HepG2 (cell line): ENCODE measurements at regions of chr6 and their contacts with region 1.

Region 1: GRCh38 chr6:33391278-33391921 is at the start of gene KIFC1:
- DNase-seq: peak; percentile 100
- ATAC-seq: peak; percentile 97
- H3K4me3 ChIP-seq: peak within 1 kb of the TSS; percentile 83 to 95 (median 90)
- H3K27ac ChIP-seq: peak within 1 kb of the TSS; percentile 82
- H3K4me1 ChIP-seq: peaks cover 49% of the 10 kb centered on the region
- H3K27me3 ChIP-seq: no peaks in the 10 kb centered on the region; a peak in 1 of 5 replicates
- CTCF ChIP-seq: peak; percentile 100
- EP300 ChIP-seq: no peak; a peak in 1 of 4 replicates
- POLR2A ChIP-seq: peak; percentile 68 to 81
- RAD21 ChIP-seq: peak; percentile 90
- total RNA-seq, gene KIFC1: 45.5 and 47.6 TPM in 2 replicates

Region 2: DNA sequence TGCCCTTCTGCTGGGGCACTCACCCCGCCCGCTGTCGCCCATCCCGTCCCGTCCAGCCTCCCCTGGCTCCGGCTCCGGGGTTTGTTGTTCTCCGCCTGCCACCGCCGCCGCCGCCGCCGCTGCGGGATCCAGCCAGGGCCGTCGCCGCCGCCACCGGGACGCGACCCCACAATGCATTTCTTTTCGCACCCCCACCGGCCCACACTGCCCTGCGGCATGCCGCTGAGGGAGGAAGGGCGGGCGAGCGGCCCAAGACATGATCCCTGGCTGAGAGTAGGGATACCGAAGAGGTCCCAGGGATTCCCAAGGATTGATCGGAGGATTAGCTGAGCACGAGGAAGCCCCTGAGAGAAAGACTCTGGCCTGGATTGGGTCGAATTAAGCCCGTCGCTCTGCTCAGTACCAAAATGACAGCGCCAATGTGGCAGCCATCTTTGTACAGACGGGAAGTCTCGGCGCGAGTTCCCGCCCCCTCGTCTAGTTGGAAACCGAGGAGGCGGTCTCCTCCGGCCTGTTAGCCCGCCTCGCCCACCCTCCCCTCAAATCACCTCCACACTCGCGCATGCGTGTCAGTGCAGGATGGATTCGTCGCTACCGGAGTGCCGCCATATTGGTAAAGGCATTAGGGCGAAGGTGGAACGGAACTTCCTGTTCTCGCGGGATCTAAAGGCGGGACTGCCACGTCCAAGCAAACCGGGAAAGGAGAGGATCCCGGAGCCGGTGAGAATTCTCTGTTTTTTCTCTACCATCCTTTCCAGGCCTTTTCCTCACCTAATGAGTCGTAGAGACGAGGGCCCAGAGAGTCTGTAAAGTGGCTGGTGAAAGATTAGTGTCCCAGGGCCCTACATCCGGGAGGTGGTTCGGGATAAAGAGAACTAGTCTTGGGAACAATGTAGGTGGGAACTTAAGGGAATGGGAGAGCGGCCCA is 190.9 kb before region 1 on chr6 and contains the starts of genes RXRB and SLC39A7:
- CTCF ChIA-PET with region 1: no interaction called
- POLR2A ChIA-PET with region 1: no interaction called
- in situ Hi-C with region 1: no loop called
- intact Hi-C with region 1: loop called (anchors 5 kb)
- DNase-seq: peak; percentile 100
- ATAC-seq: peak; percentile 48
- H3K4me3 ChIP-seq: peak within 1 kb of the TSS; percentile 87 to 93 (median 93)
- H3K27ac ChIP-seq: peak within 1 kb of the TSS; percentile 99
- H3K4me1 ChIP-seq: peaks cover 66% of the 10 kb centered on the region
- H3K27me3 ChIP-seq: peaks cover 0 to 4% of the 10 kb centered on the region in 2 experiments; a peak in 1 of 5 replicates
- CTCF ChIP-seq: no peak
- EP300 ChIP-seq: peak in 1 of 2 experiments; percentile 17; a peak in 2 of 4 replicates
- POLR2A ChIP-seq: peak in 1 of 2 experiments; percentile 90; a peak in 2 of 4 replicates
- RAD21 ChIP-seq: peak; percentile 28; the same call in 1 of the 2 replicates
- total RNA-seq, gene RXRB: 21.2 and 26.7 TPM in 2 replicates
- total RNA-seq, gene SLC39A7: 127 and 229 TPM in 2 replicates

Region 3: GRCh38 chr6:33276864-33277662 is 114.3 kb before region 1 on chr6 and contains the start of gene B3GALT4:
- CTCF ChIA-PET with region 1: interaction called, 5 read pairs
- POLR2A ChIA-PET with region 1: interaction called, 5 read pairs
- in situ Hi-C with region 1: no loop called
- intact Hi-C with region 1: loop called (anchors 1 kb)
- DNase-seq: no peak
- ATAC-seq: peak; percentile 10
- H3K4me3 ChIP-seq: no peak within 1 kb of the TSS
- H3K27ac ChIP-seq: no peak within 1 kb of the TSS
- H3K4me1 ChIP-seq: peaks cover 31% of the 10 kb centered on the region
- H3K27me3 ChIP-seq: no peaks in the 10 kb centered on the region; a peak in 1 of 5 replicates
- CTCF ChIP-seq: no peak; the same call in 1 of the 2 replicates
- EP300 ChIP-seq: no peak
- POLR2A ChIP-seq: peak; percentile 23 to 55; a peak in 3 of 4 replicates
- RAD21 ChIP-seq: peak; percentile 66
- total RNA-seq, gene B3GALT4: 0.27 TPM in 1 of 2 replicates, not detected in the other

Region 4: DNA sequence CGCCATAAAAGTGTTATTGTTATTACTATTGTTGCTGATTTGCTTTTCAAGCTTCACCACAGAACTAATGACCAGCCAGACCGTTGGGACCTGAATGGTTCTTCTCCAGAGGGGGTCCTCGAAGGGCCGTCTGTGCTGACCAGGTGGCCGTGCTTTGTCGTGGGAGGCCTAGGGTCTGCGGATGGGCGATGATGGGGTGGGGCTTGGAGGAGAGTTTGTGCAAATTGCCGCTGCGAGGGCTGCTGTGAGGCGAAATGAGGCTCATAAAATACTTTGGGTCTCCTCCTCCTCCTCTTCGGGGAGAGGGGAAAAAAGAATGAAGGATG is 67.8 kb before region 1 on chr6:
- CTCF ChIA-PET with region 1: no interaction called
- POLR2A ChIA-PET with region 1: no interaction called
- in situ Hi-C with region 1: no loop called
- intact Hi-C with region 1: loop called (anchors 1 kb)
- DNase-seq: no peak
- ATAC-seq: peak; percentile 25
- H3K4me3 ChIP-seq: peak overlapping the region; percentile 53 to 88 (median 76)
- H3K27ac ChIP-seq: peak overlapping the region; percentile 54
- H3K4me1 ChIP-seq: peaks cover 46% of the 10 kb centered on the region
- H3K27me3 ChIP-seq: no peaks in the 10 kb centered on the region; a peak in 2 of 5 replicates
- CTCF ChIP-seq: peak; percentile 53; the same call in 1 of the 2 replicates
- EP300 ChIP-seq: no peak
- POLR2A ChIP-seq: no peak
- RAD21 ChIP-seq: no peak

Region 5: GRCh38 chr6:33410050-33410710 is 18.8 kb after region 1 on chr6:
- CTCF ChIA-PET with region 1: no interaction called
- POLR2A ChIA-PET with region 1: interaction called, 5 read pairs
- in situ Hi-C with region 1: no loop called
- intact Hi-C with region 1: loop called (anchors 1 kb)
- DNase-seq: peak; percentile 96
- ATAC-seq: peak; percentile 94
- H3K4me3 ChIP-seq: peak overlapping the region; percentile 45 to 86 (median 85); a peak in 5 of 6 replicates
- H3K27ac ChIP-seq: peak overlapping the region; percentile 85
- H3K4me1 ChIP-seq: peaks cover 25% of the 10 kb centered on the region
- H3K27me3 ChIP-seq: no peaks in the 10 kb centered on the region
- CTCF ChIP-seq: peak; percentile 33
- EP300 ChIP-seq: no peak
- POLR2A ChIP-seq: peak in 1 of 2 experiments; percentile 10; a peak in 1 of 4 replicates
- RAD21 ChIP-seq: peak; percentile 25; the same call in 1 of the 2 replicates

Region 6: DNA sequence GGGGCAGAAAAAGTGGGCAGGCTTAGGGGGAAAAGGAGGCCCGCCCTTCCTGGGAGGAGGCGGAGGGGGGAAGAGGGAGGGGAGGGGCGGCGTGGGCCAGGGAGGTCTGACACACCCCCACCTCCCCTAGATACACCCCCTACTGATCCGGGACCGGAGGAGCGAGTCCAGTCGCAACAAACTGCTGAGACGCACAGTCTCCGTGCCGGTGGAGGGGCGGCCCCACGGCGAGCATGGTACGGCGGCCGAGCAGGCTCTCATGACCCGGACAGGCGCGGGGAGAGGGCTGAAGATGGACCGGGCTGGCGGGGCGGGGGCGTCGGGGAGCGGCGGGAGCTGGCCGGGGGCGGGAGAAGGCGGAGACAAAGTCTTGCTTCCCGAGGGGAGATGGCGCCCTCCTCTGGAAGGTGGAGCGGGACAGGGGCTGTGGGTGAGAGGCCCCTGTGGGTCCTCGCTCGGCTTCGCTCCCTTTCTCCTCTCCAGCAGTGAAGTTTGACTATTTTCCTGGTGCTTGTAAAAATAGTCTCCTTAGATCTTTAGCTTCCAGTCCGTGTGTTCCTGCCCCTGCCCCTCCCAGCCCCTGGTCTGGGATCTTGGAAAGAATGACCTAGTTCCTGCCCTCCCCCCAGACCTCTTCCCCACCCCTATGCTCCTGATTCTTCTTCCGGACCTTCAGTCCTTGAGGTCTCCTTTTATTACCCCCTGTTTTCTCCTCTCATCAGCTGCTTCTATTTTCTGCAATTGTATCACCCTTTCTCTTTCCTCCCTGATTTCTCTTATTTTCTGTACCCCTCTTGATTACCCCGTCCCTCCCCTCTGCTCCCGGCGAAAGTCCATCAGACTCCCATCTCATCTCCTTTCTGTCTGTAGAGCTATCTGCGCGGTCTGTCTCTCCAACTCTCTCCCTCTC is 34.5 kb after region 1 on chr6:
- CTCF ChIA-PET with region 1: interaction called, 19 read pairs
- POLR2A ChIA-PET with region 1: interaction called, 4 read pairs
- in situ Hi-C with region 1: no loop called
- intact Hi-C with region 1: no loop called
- DNase-seq: peak; percentile 73
- ATAC-seq: peak; percentile 76
- H3K4me3 ChIP-seq: peak overlapping the region; percentile 68 to 74 (median 74)
- H3K27ac ChIP-seq: peak overlapping the region; percentile 46
- H3K4me1 ChIP-seq: peaks cover 51% of the 10 kb centered on the region
- H3K27me3 ChIP-seq: peaks cover 2 to 35% of the 10 kb centered on the region in 2 experiments; a peak in 3 of 5 replicates
- CTCF ChIP-seq: peak; percentile 84
- EP300 ChIP-seq: no peak
- POLR2A ChIP-seq: peak in 1 of 2 experiments; percentile 81; a peak in 2 of 4 replicates
- RAD21 ChIP-seq: peak; percentile 72